Activated B cell treated with CpG ODN at 0.5 μM for 24 hours (primary cell): ENCODE measurements at regions of chr19 and their contacts with region 1.

Region 1: DNA sequence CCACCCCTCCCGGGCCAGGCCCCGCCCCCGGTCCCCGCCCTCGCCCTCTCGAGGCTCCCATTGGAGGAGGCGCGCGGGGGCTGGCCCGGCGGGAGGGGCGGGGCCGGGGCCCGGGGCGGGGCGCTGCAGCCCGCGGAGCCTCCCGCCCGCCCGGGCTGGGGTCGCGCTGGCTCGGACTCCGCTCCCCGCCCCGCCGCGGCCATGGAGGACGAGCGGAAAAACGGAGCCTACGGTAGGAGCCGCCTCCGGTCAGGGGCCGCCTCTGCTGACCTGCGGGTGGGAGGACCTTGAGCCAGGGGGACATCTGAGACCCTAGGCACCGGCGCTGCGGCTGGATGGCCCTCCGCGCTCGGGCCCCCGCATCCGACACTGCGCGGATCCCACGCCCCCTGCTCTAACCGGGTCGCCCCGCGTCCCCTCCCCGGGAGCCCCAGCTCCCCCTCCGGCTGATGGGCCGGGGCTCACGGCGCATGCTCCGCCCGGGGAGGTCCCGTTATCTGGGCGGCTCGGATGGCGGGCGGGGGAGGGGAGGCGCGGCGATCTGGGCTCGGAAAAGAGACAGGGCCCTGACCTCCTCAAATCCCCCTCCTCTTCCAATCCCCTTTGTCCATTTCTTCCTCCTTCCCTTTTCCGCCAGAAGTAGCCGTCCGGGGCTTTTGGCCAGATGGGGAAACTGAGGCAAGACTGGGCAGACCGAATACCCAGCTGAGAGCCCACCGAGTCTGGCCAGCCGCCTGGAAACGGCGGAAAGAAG is 15.4 kb upstream of the AP1M2 start:
- DNase-seq: peak; percentile 86
- ATAC-seq: peak; percentile 73
- H3K4me3 Mint-ChIP-seq: peak overlapping the region; percentile 97
- H3K27ac Mint-ChIP-seq: peak overlapping the region; percentile 98
- H3K4me1 Mint-ChIP-seq: peaks cover 39% of the 10 kb centered on the region
- H3K27me3 Mint-ChIP-seq: no peaks in the 10 kb centered on the region
- CTCF ChIP-seq: no peak

Region 2: GRCh38 chr19:10580979-10581631 is 21.4 kb before region 1 on chr19:
- CTCF ChIA-PET with region 1: interaction called, 42 read pairs
- POLR2A ChIA-PET with region 1: interaction called, 12 read pairs
- intact Hi-C with region 1: loop called (anchors 1 kb)
- DNase-seq: peak; percentile 80
- ATAC-seq: peak; percentile 100
- H3K4me3 Mint-ChIP-seq: no peak overlapping the region
- H3K27ac Mint-ChIP-seq: no peak overlapping the region
- H3K4me1 Mint-ChIP-seq: peaks cover 16% of the 10 kb centered on the region
- H3K27me3 Mint-ChIP-seq: no peaks in the 10 kb centered on the region
- CTCF ChIP-seq: peak; percentile 73

Region 3: DNA sequence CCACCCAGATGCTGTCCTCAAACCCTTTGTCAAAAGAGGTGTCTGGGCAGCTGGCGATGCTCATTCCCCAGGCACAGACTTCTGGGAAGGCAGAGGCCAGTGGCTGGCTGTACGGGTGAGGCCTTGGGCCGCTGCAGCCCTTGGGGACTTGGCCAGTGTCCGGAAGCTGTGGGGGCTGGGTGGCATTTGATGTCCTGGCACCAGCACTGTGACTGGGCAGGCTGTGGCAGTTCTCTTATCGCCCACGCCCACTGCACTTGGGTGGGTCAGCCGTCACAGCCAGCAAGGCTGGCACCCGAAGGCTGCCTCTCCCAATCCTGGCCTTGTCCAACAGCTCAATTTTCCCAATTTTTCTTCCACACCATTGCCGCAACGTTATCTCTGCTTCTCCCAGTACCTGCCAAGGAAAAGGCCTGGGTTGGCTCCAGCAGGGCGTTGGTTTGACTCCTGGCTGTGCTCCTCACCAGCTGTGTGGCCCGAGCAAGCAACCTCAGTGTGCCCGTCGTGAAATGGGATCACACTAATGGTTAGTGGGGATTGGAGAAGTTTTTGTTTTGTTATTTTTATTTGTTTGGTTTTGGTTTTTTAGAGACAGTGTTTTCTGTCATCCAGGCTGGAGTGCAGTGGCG is 10.1 kb after region 1 on chr19:
- CTCF ChIA-PET with region 1: no interaction called
- POLR2A ChIA-PET with region 1: interaction called, 35 read pairs
- intact Hi-C with region 1: no loop called
- DNase-seq: no peak
- ATAC-seq: no peak
- H3K4me3 Mint-ChIP-seq: no peak overlapping the region
- H3K27ac Mint-ChIP-seq: peak overlapping the region; percentile 6
- H3K4me1 Mint-ChIP-seq: peaks cover 61% of the 10 kb centered on the region
- H3K27me3 Mint-ChIP-seq: no peaks in the 10 kb centered on the region
- CTCF ChIP-seq: no peak

Region 4: GRCh38 chr19:10701955-10702525 is 99.5 kb after region 1 on chr19:
- CTCF ChIA-PET with region 1: interaction called, 4 read pairs
- POLR2A ChIA-PET with region 1: interaction called, 13 read pairs
- intact Hi-C with region 1: no loop called
- DNase-seq: peak; percentile 31
- ATAC-seq: peak; percentile 29
- H3K4me3 Mint-ChIP-seq: peak overlapping the region; percentile 93
- H3K27ac Mint-ChIP-seq: peak overlapping the region; percentile 85
- H3K4me1 Mint-ChIP-seq: peaks cover 12% of the 10 kb centered on the region
- H3K27me3 Mint-ChIP-seq: peaks cover 2% of the 10 kb centered on the region
- CTCF ChIP-seq: no peak